Ascending aorta (tissue), 2 donors: ENCODE measurements at regions of chr5 and their contacts with region 1.

Region 1: DNA sequence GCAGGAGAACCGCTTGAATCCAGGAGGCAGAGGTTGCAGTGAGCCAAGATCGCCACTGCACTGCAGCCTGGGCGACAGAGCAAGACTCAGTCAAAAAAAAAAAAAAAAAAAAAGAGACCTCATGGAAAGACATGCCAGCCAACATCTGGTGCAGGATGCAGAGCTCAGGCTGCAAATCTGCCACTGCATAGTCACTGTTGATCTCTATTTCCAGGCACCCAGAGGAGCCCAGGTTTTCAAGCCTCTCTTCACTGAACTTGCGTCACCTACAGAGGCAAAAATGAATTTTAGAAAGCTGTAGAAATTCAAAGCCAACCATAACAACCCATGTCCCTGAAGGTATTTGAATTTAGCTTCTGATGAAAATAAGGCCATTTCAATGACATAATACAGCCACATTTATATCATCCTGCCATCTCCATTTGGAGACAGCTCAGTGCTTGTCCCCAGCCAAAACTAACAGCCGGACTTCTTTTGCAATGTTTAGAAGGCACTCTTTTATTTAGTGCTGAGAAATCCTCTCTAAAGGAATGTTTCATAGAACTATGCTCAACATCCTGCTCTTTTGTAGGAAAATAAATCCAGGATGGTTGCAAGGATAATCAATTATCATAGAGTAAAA is 113.3 kb downstream of the SNX18 start:
- DNase-seq: peak in 1 of 2 donors; percentile 88
- H3K4me3 ChIP-seq: no peak overlapping the region
- H3K27ac ChIP-seq: peak overlapping the region; percentile 79 to 83
- H3K4me1 ChIP-seq: peaks cover 6 to 25% of the 10 kb centered on the region in 2 donors
- H3K27me3 ChIP-seq: no peaks in the 10 kb centered on the region
- CTCF ChIP-seq: peak in 1 of 3 experiments; percentile 11

Region 2: DNA sequence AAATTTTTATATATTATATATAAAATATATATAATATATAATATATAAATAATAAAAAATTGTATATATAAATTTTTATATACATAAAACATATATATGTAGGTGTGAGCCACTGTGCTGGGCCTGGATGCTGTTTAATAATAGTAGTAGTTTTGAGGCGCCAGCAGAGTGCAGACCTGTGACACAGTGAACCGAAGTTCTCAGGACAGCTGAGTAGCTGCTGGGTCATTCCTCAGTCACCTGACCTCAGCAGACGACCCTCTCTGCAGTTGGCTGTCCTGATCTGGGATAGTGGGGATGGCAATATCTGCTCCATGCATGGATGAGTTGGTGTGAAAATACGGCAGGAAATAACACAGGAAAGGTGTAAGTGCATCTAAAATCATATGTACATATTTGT is 116.6 kb before region 1 on chr5:
- intact Hi-C with region 1: no loop called
- DNase-seq: no peak
- H3K4me3 ChIP-seq: no peak overlapping the region
- H3K27ac ChIP-seq: no peak overlapping the region
- H3K4me1 ChIP-seq: peaks cover 0 to 5% of the 10 kb centered on the region in 2 donors
- H3K27me3 ChIP-seq: no peaks in the 10 kb centered on the region
- CTCF ChIP-seq: no peak

Region 3: GRCh38 chr5:54646356-54647101 is 15.7 kb after region 1 on chr5:
- intact Hi-C with region 1: loop called (anchors 2 kb)
- DNase-seq: peak; percentile 77 to 94
- H3K4me3 ChIP-seq: peak overlapping the region; percentile 34 to 55
- H3K27ac ChIP-seq: peak overlapping the region; percentile 89 to 93
- H3K4me1 ChIP-seq: peaks cover 17 to 50% of the 10 kb centered on the region in 2 donors
- H3K27me3 ChIP-seq: no peaks in the 10 kb centered on the region
- CTCF ChIP-seq: peak in 1 of 3 experiments; percentile 7

Region 4: GRCh38 chr5:54985301-54986268 is 354.7 kb after region 1 on chr5 and contains the start of gene ESM1:
- intact Hi-C with region 1: no loop called
- DNase-seq: no peak
- H3K4me3 ChIP-seq: peak within 1 kb of the TSS in 1 of 2 donors; percentile 33
- H3K27ac ChIP-seq: no peak within 1 kb of the TSS
- H3K4me1 ChIP-seq: no peaks in the 10 kb centered on the region
- H3K27me3 ChIP-seq: no peaks in the 10 kb centered on the region
- CTCF ChIP-seq: no peak
- total RNA-seq, gene ESM1: not detected